ENCODE measurements at regions of chr3 and their contacts with region 1.

Region 1: GRCh38 chr3:180912304-180913296 is at the start of gene FXR1:
- DNase-seq: peak; percentile 85 to 88
- ATAC-seq: peak; percentile 94 to 96
- H3K4me3 ChIP-seq: peak within 1 kb of the TSS; percentile 64 to 94 (median 80)
- H3K27ac ChIP-seq: peak within 1 kb of the TSS; percentile 87 to 94 (median 90)
- H3K4me1 ChIP-seq: peaks cover 40 to 43% of the 10 kb centered on the region in 2 donors
- H3K27me3 ChIP-seq: no peaks in the 10 kb centered on the region
- CTCF ChIP-seq: peak; percentile 70 to 97 (median 84)
- POLR2A ChIP-seq: peak; percentile 84 to 88
- total RNA-seq, gene FXR1: 547 to 578 (median 571) TPM

Region 2: GRCh38 chr3:180870008-180870699 is 42.4 kb before region 1 on chr3:
- in situ Hi-C with region 1: no loop called
- intact Hi-C with region 1: loop called (anchors 1 kb)
- DNase-seq: peak; percentile 45 to 62
- ATAC-seq: peak; percentile 35 to 53
- H3K4me3 ChIP-seq: peak overlapping the region; percentile 52 to 62 (median 54)
- H3K27ac ChIP-seq: peak overlapping the region; percentile 85 to 89 (median 86)
- H3K4me1 ChIP-seq: peaks cover 18 to 26% of the 10 kb centered on the region in 2 donors
- H3K27me3 ChIP-seq: no peaks in the 10 kb centered on the region
- CTCF ChIP-seq: peak in 1 of 5 experiments; percentile 25
- POLR2A ChIP-seq: peak; percentile 35 to 53

Region 3: DNA sequence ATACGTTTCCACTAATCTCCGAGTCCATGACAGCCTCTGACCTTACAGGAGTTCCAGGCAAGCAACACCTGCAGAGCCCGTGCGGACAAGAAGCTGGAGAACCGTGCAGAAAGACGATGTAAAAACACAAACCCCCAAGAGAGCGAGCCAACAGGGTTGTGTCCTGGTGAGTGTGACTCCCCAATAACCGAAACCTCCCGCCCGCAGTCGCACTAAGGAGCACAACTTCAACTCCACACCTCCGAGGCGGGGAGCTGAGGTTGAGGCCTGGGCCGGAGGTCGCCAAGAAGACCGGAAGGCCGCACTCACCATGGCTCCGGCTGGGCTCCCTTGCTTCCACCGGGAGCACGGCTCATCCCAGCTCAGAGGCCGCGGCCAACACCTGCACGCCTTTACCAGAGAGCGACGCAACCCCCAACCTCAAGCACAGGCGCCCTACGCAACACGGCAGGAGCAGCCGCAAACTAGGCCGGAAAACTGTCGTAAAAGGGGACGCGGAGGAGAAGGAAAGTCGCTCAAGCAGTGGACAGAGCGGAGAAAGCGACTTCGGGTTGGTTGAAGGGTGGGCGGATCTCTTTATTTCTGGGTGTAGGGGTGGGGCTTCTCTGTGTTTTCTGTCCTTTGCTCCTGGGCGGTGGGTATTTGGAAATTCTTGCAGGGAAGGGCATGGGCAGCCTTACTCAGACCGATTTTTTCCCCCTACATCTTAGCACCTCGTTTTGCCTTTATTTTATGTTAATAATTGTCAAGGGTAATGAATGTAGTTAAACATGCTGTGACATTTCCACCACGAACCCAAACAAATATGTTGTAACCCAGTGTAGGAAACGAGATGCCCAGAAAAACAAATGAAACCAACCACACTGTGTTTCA is 76.9 kb after region 1 on chr3 and contains the start of gene DNAJC19:
- in situ Hi-C with region 1: no loop called
- intact Hi-C with region 1: loop called (anchors 1 kb)
- DNase-seq: peak; percentile 97
- ATAC-seq: peak; percentile 94 to 98
- H3K4me3 ChIP-seq: peak within 1 kb of the TSS; percentile 74 to 94 (median 84)
- H3K27ac ChIP-seq: peak within 1 kb of the TSS; percentile 91 to 97 (median 92)
- H3K4me1 ChIP-seq: peaks cover 32 to 33% of the 10 kb centered on the region in 2 donors
- H3K27me3 ChIP-seq: no peaks in the 10 kb centered on the region
- CTCF ChIP-seq: no peak
- POLR2A ChIP-seq: peak; percentile 81 to 83
- total RNA-seq, gene DNAJC19: 34.2 to 51.7 (median 38.0) TPM

Region 4: DNA sequence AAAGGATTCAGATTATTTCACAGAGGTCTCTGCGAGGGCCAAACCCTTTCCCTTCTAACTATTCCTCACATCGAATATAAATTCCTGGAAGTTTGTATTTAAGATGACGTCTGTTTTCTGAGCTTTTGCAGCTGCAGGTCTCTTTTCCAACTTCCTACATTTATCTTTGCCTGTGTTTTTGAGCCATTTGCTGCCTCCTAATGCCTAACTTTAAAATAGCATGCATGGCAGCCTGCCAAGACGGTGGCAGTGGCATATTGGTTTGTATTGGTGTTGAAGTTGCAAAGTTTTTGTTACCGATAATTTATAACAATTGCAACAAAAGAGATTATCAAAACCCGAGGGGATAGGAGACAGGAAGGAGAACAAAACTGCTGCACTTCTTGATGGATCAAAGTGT is 264.0 kb after region 1 on chr3:
- in situ Hi-C with region 1: no loop called
- intact Hi-C with region 1: loop called (anchors 10 kb)
- DNase-seq: peak; percentile 13 to 32
- ATAC-seq: no peak
- H3K4me3 ChIP-seq: no peak overlapping the region
- H3K27ac ChIP-seq: no peak overlapping the region
- H3K4me1 ChIP-seq: no peaks in the 10 kb centered on the region
- H3K27me3 ChIP-seq: no peaks in the 10 kb centered on the region
- CTCF ChIP-seq: peak; percentile 15 to 59 (median 42)
- POLR2A ChIP-seq: no peak

Measured in gastrocnemius medialis (tissue), 4 donors.